ENCODE measurements at regions of chr9 and their contacts with region 1.

Region 1: DNA sequence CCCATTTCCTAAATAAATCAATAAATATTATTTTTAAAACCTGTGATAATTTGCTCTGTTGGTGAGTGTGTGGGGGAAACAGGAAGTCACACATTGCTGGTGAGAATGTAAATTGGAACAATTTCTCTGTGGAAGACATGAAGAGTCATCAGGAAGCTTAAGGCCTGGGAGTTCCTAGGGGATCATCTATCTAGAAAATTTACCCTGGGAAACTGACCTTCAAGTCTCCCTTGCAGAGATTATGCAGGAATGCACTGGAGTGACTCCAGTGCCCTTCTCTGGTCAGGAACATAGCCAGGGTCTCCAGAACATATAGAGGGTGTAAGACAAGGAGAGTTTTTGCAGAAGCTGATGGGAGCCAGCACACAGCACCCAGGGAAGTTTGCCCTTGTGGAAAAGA is 13.0 kb upstream of the GCNT1 start:
- DNase-seq: no peak
- ATAC-seq: no peak

Region 2: GRCh38 chr9:76321205-76321828 is 124.7 kb before region 1 on chr9:
- intact Hi-C with region 1: no loop called
- DNase-seq: no peak
- ATAC-seq: no peak

Region 3: DNA sequence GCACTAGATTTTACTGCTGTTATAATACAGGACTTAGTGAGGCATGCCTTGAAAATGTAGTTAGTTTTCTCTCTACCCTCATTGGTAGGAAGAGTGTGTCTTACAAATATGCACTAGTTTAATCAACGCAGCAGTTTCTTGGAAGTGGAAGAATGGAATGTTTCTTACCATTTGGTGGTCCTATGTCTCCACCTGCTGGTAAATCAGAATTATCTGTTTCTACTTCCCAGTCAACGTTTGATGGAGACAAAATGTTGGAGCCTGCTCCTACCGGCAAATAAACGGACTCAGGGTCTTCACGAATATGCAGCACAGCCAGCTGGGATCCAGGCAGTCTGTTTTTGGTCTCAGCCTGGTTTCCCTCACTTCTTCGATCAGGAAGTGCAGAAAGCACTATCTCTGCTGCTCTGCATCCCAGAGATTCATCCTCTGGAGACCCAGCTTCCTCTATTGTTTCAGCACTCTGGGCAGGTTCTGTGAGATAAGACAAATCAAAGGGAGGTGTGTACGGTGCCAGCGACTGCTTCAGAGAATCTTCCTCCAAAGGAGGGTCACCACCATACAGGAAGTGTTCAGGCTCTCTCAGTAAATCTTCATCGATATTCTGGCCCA is 258.7 kb after region 1 on chr9:
- intact Hi-C with region 1: loop called (anchors 5 kb)
- DNase-seq: no peak
- ATAC-seq: peak; percentile 60 to 69